Heart left ventricle (tissue), 16 donors: ENCODE measurements at regions of chr12 and their contacts with region 1.

Region 1: DNA sequence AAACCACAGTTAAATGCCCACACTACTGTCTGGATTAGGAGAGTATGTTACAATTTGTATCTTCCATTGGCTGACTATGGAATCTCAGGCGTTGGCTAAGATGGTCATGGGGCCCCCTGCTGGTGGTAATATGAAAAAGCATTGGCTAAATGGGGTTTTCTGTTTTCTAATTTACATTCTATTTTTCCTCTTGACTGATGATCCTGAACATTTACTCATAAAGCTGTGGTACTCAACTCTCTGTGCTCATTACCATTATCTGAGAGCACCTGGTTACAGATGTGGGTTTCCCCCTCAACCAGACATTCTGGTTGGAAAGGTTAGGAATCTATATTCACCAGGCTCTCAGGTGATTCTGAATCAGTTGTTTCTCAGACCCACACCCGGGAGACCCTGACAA is 64.8 kb downstream of the WSCD2 start:
- DNase-seq: no peak
- ATAC-seq: peak in 1 of 4 donors; percentile 23
- H3K4me3 ChIP-seq: no peak overlapping the region
- H3K27ac ChIP-seq: no peak overlapping the region
- H3K4me1 ChIP-seq: peaks cover 0 to 10% (median 0%) of the 10 kb centered on the region in 12 donors
- H3K27me3 ChIP-seq: peaks cover 0 to 6% (median 0%) of the 10 kb centered on the region in 9 donors
- CTCF ChIP-seq: peak; percentile 56 to 77 (median 70)
- POLR2A ChIP-seq: no peak

Region 2: DNA sequence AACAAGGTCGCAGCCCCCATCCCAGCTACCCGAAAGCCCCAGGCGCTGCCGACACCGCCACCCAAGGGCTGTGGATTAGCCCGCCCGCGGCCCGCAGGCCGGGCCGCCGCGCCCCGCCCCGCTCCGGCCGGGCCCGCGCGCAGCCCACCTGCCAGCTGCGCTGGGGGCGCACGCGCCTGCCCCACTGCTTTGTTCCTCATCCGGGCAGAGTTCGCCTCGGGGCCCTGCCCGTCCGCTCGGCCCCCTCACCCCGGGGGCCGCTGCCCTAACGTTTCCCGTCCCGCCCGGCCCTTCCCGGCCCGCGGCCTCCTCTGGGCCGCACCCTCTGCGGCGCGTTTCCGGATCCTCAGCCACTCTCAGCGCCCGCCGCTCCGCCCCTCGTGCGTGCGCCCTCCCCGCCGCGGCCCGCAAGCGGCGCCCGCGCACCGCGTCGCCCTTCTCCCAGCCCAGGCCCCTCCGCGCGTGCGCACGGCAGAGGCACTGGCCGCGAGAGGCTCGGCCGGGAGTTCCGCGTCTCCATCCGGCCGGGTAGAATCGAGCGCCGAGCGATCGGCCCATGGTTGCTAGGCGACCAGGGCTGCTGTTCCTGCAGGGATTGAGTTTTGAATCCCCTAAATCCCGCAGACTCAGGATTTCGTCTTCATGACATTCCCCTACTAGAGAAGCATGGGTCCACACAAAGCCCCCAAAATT is 433.0 kb before region 1 on chr12 and contains the start of gene PRDM4:
- intact Hi-C with region 1: loop called in 2 of 10 experiments (anchors 10 kb)
- DNase-seq: peak; percentile 93 to 96 (median 96)
- ATAC-seq: peak; percentile 96 to 99 (median 98)
- H3K4me3 ChIP-seq: peak within 1 kb of the TSS; percentile 76 to 94 (median 85)
- H3K27ac ChIP-seq: peak within 1 kb of the TSS in 11 of 12 donors; percentile 59 to 87 (median 77)
- H3K4me1 ChIP-seq: peaks cover 5 to 35% (median 28%) of the 10 kb centered on the region in 12 donors
- H3K27me3 ChIP-seq: no peaks in the 10 kb centered on the region
- CTCF ChIP-seq: peak in 11 of 12 donors; percentile 13 to 66 (median 44)
- POLR2A ChIP-seq: peak; percentile 45 to 93
- total RNA-seq, gene PRDM4: 11.6 to 24.6 (median 15.0) TPM

Region 3: GRCh38 chr12:107992870-107993451 is 201.0 kb before region 1 on chr12:
- intact Hi-C with region 1: loop called in 5 of 10 experiments (anchors 5 to 10 kb)
- DNase-seq: no peak
- ATAC-seq: peak in 1 of 4 donors; percentile 38
- H3K4me3 ChIP-seq: no peak overlapping the region
- H3K27ac ChIP-seq: no peak overlapping the region
- H3K4me1 ChIP-seq: no peaks in the 10 kb centered on the region
- H3K27me3 ChIP-seq: peaks cover 0 to 26% (median 3%) of the 10 kb centered on the region in 9 donors
- CTCF ChIP-seq: peak in 10 of 12 donors; percentile 5 to 45 (median 24)
- POLR2A ChIP-seq: no peak

Region 4: GRCh38 chr12:108112832-108113556 is 80.9 kb before region 1 on chr12:
- intact Hi-C with region 1: loop called in 2 of 10 experiments (anchors 5 kb)
- DNase-seq: peak in 1 of 5 donors; percentile 41
- ATAC-seq: peak; percentile 73 to 92 (median 74)
- H3K4me3 ChIP-seq: no peak overlapping the region
- H3K27ac ChIP-seq: peak overlapping the region in 4 of 12 donors; percentile 6 to 74 (median 30)
- H3K4me1 ChIP-seq: peaks cover 0 to 11% (median 0%) of the 10 kb centered on the region in 12 donors
- H3K27me3 ChIP-seq: peaks cover 0 to 7% (median 0%) of the 10 kb centered on the region in 9 donors
- CTCF ChIP-seq: peak in 3 of 12 donors; percentile 8 to 22 (median 12)
- POLR2A ChIP-seq: no peak

Region 5: GRCh38 chr12:108457006-108457733 is 263.3 kb after region 1 on chr12:
- intact Hi-C with region 1: loop called in 1 of 10 experiments (anchors 5 kb)
- DNase-seq: peak in 1 of 5 donors; percentile 16
- ATAC-seq: peak; percentile 55 to 86 (median 81)
- H3K4me3 ChIP-seq: no peak overlapping the region
- H3K27ac ChIP-seq: no peak overlapping the region
- H3K4me1 ChIP-seq: peaks cover 0 to 5% (median 0%) of the 10 kb centered on the region in 12 donors
- H3K27me3 ChIP-seq: peaks cover 0 to 22% (median 11%) of the 10 kb centered on the region in 9 donors
- CTCF ChIP-seq: peak; percentile 57 to 79 (median 68)
- POLR2A ChIP-seq: no peak